ENCODE measurements at regions of chr11 and their contacts with region 1.

Region 1: GRCh38 chr11:9137293-9138132 is 46.1 kb upstream of the SCUBE2 start:
- DNase-seq: peak; percentile 73 to 95
- H3K4me3 ChIP-seq: no peak overlapping the region
- H3K27ac ChIP-seq: no peak overlapping the region
- H3K4me1 ChIP-seq: peaks cover 0 to 12% (median 2%) of the 10 kb centered on the region in 4 experiments; a peak in 3 of 7 replicates
- H3K27me3 ChIP-seq: no peaks in the 10 kb centered on the region
- CTCF ChIP-seq: peak; percentile 94 to 99 (median 96)
- EP300 ChIP-seq: no peak
- POLR2A ChIP-seq: no peak
- RAD21 ChIP-seq: peak; percentile 93 to 95

Region 2: GRCh38 chr11:9037046-9037780 is 100.3 kb before region 1 on chr11:
- CTCF ChIA-PET with region 1: interaction called, 10 read pairs
- POLR2A ChIA-PET with region 1: no interaction called
- DNase-seq: no peak
- H3K4me3 ChIP-seq: no peak overlapping the region
- H3K27ac ChIP-seq: 0 out of 2 replicates have a peak overlapping the region, but pooled peaks have one; percentile 7
- H3K4me1 ChIP-seq: peaks cover 0 to 8% (median 2%) of the 10 kb centered on the region in 4 experiments; a peak in 3 of 7 replicates
- H3K27me3 ChIP-seq: no peaks in the 10 kb centered on the region
- CTCF ChIP-seq: no peak
- EP300 ChIP-seq: no peak
- POLR2A ChIP-seq: no peak
- RAD21 ChIP-seq: no peak

Region 3: GRCh38 chr11:9066433-9066925 is 71.0 kb before region 1 on chr11:
- CTCF ChIA-PET with region 1: interaction called, 17 read pairs
- POLR2A ChIA-PET with region 1: no interaction called
- DNase-seq: peak in 1 of 2 experiments; percentile 47
- H3K4me3 ChIP-seq: no peak overlapping the region
- H3K27ac ChIP-seq: 0 out of 2 replicates have a peak overlapping the region, but pooled peaks have one; percentile 27
- H3K4me1 ChIP-seq: peaks cover 0 to 6% (median 2%) of the 10 kb centered on the region in 4 experiments; a peak in 3 of 7 replicates
- H3K27me3 ChIP-seq: no peaks in the 10 kb centered on the region
- CTCF ChIP-seq: no peak
- EP300 ChIP-seq: no peak
- POLR2A ChIP-seq: no peak
- RAD21 ChIP-seq: 0 out of 4 replicates have a peak, but pooled peaks have one; percentile 1 to 2

Region 4: DNA sequence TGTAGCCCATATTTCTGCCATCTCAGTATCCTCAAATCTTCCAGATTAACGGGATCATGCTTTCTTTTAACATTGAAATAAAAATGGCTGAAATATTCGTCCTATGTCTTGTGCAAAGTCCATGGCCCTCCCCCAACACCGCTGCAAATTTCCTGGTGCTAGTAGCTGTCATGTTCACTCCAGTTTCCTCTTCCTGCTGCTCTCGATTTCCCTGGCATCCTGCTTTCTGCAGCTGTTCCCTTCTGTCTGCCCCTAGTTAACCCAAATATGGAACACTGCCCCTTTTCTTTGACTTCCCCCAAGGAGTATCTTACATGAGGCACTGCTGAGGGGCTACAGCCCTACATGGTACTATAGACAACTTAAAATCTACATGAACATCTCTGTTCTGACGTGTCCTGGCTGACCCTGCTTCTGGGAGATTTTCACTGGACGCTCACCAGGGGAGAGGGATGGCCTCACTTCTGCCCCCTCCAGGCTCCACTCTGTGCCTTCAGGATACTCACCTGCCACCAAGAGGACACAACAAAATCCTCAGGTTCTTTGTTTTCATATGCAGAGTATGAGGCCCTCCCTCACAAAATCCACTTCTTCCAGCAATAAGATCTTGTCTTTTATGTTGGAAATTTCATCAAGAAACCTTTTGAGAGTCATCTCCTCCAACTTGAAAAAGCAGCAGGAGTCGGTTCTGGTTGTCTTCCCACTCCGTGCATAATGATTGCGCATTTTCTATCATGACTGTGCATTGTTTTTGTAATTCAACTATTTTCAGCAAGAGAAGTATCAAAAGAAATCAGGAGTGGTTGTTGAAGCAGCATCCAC is 16.6 kb before region 1 on chr11:
- CTCF ChIA-PET with region 1: interaction called, 12 read pairs
- POLR2A ChIA-PET with region 1: no interaction called
- DNase-seq: peak; percentile 36 to 78
- H3K4me3 ChIP-seq: 0 out of 8 replicates have a peak overlapping the region, but pooled peaks of 1 of the 4 experiments have one; percentile 10
- H3K27ac ChIP-seq: 0 out of 2 replicates have a peak overlapping the region, but pooled peaks have one; percentile 4
- H3K4me1 ChIP-seq: peaks cover 4 to 9% (median 5%) of the 10 kb centered on the region in 4 experiments; a peak in 5 of 7 replicates
- H3K27me3 ChIP-seq: no peaks in the 10 kb centered on the region
- CTCF ChIP-seq: peak; percentile 84 to 99 (median 84)
- EP300 ChIP-seq: no peak; a peak in 1 of 3 replicates
- POLR2A ChIP-seq: no peak
- RAD21 ChIP-seq: peak; percentile 48 to 68

Region 5: DNA sequence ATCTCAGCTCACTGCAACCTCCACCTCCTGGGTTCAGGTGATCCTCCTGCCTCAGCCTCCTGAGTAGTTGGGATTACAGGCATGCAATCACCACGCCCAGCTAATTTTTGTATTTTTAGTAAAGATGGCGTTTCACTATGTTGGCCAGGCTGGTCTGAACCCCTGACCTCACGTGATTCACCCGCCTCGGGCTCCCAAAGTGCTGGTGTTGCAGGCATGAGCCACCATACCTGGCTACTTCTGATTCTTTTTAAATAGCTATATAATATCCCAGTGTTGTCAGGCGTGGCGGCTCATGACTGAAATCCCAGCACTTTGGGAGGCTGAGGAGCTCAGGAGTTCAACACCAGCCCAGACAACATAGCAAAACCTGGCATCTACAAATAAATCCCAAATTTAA is 156.1 kb after region 1 on chr11:
- CTCF ChIA-PET with region 1: no interaction called
- POLR2A ChIA-PET with region 1: no interaction called
- DNase-seq: peak in 1 of 2 experiments; percentile 24
- H3K4me3 ChIP-seq: no peak overlapping the region
- H3K27ac ChIP-seq: no peak overlapping the region
- H3K4me1 ChIP-seq: no peaks in the 10 kb centered on the region
- H3K27me3 ChIP-seq: no peaks in the 10 kb centered on the region
- CTCF ChIP-seq: no peak
- EP300 ChIP-seq: no peak
- POLR2A ChIP-seq: no peak
- RAD21 ChIP-seq: no peak

Region 6: GRCh38 chr11:9506489-9507276 is 369.2 kb after region 1 on chr11:
- CTCF ChIA-PET with region 1: interaction called, 11 read pairs
- POLR2A ChIA-PET with region 1: no interaction called
- DNase-seq: peak; percentile 79 to 86
- H3K4me3 ChIP-seq: peak overlapping the region in 1 of 4 experiments; percentile 37; a peak in 2 of 8 replicates
- H3K27ac ChIP-seq: no peak overlapping the region; the same call in 1 of the 2 replicates
- H3K4me1 ChIP-seq: peaks cover 0 to 6% (median 3%) of the 10 kb centered on the region in 4 experiments; a peak in 5 of 7 replicates
- H3K27me3 ChIP-seq: no peaks in the 10 kb centered on the region
- CTCF ChIP-seq: peak; percentile 24 to 94 (median 82)
- EP300 ChIP-seq: no peak
- POLR2A ChIP-seq: no peak
- RAD21 ChIP-seq: peak; percentile 92 to 93